Prostate gland (tissue), 2 donors: ENCODE measurements at regions of chr1 and their contacts with region 1.

Region 1: DNA sequence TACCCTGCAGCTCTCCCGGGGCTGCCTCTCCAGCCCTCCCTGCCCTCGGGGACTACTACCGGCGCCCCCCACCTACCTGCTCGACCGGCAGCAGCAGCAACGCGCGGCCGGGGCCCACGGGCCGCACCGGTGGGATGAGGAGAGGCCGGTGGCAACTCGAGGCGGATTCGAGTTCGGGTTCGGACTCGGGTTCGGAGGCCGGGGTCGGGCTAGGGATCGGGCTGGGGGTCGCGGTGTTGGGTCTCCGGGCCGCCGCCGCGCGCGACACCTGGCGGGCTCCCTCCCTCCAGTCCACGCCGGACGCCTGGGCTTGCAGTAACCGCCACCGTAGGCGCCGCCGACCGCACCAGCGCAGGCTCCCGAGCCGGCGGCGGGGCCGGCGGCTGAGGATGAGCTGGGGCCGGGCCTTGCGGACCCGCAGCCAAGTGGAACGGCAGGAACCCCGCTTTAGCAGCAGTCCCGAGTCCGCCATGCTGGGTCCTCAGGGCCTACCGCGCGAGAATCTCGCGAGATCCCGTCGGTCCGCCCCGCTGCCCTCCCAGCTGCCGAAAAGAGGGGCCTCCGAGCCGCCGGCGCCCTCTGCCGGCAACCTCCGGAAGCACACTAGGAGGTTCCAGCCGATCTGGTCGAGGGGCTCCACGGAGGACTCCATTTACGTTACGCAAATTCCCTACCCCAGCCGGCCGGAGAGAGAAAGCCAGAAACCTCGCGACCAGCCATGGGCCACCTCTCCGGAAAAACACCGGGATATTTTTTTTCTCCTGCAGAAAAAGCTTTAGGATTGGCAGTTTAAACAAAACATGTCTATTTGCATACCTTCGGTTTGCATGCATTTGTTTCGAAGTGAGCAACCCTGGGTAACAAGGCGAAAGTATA is at the start of gene NOL9:
- DNase-seq: peak; percentile 89
- H3K4me3 ChIP-seq: peak within 1 kb of the TSS; percentile 85 to 98
- H3K27ac ChIP-seq: peak within 1 kb of the TSS; percentile 55 to 66
- H3K4me1 ChIP-seq: no peaks in the 10 kb centered on the region
- H3K27me3 ChIP-seq: no peaks in the 10 kb centered on the region
- CTCF ChIP-seq: peak; percentile 95 to 99 (median 98)
- POLR2A ChIP-seq: peak; percentile 42
- total RNA-seq, gene NOL9: 15.7 to 20.9 TPM

Region 2: DNA sequence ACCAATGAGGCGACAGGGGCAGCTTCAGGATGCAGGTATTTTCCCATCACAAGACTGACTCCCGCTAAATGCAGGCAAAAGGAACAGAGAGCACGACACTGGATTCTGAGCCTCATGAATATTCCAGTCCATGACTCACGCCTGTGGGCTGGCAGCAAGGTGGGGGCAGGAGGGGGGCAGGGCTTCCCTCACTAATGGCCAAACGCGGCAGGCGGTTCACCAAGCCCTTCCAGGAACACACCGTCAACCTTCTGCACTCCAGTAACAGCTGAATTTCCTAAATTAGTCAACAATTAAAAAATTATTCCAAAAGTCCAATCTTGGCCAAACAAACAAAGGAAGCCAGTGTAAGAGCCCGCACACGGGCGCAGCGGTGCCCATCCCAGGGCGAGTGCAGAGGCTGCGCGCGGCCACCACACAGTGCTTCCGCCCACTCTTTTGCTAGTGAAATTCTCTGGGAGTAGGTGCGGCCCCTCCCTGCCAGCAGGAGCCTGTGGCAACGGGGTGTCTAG is 280.8 kb before region 1 on chr1:
- intact Hi-C with region 1: no loop called
- DNase-seq: no peak
- H3K4me3 ChIP-seq: no peak overlapping the region
- H3K27ac ChIP-seq: no peak overlapping the region
- H3K4me1 ChIP-seq: no peaks in the 10 kb centered on the region
- H3K27me3 ChIP-seq: no peaks in the 10 kb centered on the region
- CTCF ChIP-seq: no peak
- POLR2A ChIP-seq: no peak

Region 3: GRCh38 chr1:6489799-6490180 is 64.5 kb before region 1 on chr1:
- intact Hi-C with region 1: loop called (anchors 2 kb)
- DNase-seq: peak; percentile 66
- H3K4me3 ChIP-seq: peak overlapping the region; percentile 66 to 70
- H3K27ac ChIP-seq: peak overlapping the region; percentile 81 to 82
- H3K4me1 ChIP-seq: peaks cover 6% of the 10 kb centered on the region
- H3K27me3 ChIP-seq: no peaks in the 10 kb centered on the region
- CTCF ChIP-seq: peak; percentile 64 to 89 (median 76)
- POLR2A ChIP-seq: no peak

Region 4: DNA sequence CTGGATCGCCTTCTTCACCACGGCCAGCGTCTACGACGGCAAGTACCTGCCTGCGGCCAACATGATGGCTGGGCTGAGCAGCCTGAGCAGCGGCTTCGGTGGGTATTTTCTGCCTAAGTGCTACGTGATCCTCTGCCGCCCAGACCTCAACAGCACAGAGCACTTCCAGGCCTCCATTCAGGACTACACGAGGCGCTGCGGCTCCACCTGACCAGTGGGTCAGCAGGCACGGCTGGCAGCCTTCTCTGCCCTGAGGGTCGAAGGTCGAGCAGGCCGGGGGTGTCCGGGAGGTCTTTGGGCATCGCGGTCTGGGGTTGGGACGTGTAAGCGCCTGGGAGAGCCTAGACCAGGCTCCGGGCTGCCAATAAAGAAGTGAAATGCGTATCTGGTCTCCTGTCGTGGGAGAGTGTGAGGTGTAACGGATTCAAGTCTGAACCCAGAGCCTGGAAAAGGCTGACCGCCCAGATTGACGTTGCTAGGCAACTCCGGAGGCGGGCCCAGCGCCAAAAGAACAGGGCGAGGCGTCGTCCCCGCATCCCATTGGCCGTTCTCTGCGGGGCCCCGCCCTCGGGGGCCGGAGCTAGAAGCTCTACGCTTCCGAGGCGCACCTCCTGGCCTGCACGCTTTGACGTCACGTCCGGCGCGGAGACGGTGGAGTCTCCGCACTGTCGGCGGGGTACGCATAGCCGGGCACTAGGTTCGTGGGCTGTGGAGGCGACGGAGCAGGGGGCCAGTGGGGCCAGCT is 25.3 kb after region 1 on chr1 and contains the start of gene ZBTB48:
- intact Hi-C with region 1: loop called (anchors 2 kb)
- DNase-seq: peak; percentile 99
- H3K4me3 ChIP-seq: peak within 1 kb of the TSS; percentile 87 to 90
- H3K27ac ChIP-seq: peak within 1 kb of the TSS; percentile 90 to 94
- H3K4me1 ChIP-seq: peaks cover 16% of the 10 kb centered on the region
- H3K27me3 ChIP-seq: no peaks in the 10 kb centered on the region
- CTCF ChIP-seq: peak in 1 of 4 experiments; percentile 16
- POLR2A ChIP-seq: peak; percentile 95
- total RNA-seq, gene ZBTB48: 41.3 to 51.0 TPM

Region 5: DNA sequence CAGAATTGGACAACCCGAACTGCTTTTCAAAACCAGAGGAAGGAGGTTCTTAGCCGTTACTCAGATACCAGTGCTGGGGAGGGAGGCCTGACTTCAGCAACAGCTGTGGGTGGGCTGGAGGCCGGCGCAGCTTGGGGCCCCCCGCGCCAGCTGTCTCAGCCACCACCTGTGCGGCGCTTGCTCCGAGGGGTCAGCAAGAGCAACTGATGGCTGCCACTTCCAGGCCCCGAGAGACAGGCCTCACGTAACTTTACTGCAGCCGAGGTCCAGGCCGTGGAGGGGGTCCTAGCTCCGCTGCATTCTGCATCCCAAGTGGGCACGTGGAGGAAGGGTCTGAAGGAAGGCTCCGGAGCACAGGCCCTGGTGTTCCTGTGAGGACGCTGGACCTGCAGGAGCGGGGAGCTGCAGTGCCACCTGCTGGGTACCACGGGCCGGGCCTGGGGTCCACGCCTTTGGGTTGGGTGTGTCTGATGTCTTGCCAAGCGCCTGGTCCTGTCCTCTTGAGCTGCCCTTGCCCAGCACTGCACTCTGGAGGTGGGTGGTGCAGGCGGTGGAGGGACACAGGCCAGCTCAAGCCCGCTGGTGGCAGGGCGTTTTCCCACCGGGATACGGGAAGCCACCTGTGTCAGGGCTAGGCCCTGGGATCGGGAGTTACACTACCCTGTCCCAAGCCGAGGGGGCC is 80.2 kb after region 1 on chr1:
- intact Hi-C with region 1: loop called (anchors 2 kb)
- DNase-seq: peak; percentile 59
- H3K4me3 ChIP-seq: no peak overlapping the region
- H3K27ac ChIP-seq: no peak overlapping the region
- H3K4me1 ChIP-seq: no peaks in the 10 kb centered on the region
- H3K27me3 ChIP-seq: no peaks in the 10 kb centered on the region
- CTCF ChIP-seq: peak in 3 of 4 experiments; percentile 25 to 76 (median 57)
- POLR2A ChIP-seq: no peak